ENCODE measurements at regions of chr5 and their contacts with region 1.

Region 1: DNA sequence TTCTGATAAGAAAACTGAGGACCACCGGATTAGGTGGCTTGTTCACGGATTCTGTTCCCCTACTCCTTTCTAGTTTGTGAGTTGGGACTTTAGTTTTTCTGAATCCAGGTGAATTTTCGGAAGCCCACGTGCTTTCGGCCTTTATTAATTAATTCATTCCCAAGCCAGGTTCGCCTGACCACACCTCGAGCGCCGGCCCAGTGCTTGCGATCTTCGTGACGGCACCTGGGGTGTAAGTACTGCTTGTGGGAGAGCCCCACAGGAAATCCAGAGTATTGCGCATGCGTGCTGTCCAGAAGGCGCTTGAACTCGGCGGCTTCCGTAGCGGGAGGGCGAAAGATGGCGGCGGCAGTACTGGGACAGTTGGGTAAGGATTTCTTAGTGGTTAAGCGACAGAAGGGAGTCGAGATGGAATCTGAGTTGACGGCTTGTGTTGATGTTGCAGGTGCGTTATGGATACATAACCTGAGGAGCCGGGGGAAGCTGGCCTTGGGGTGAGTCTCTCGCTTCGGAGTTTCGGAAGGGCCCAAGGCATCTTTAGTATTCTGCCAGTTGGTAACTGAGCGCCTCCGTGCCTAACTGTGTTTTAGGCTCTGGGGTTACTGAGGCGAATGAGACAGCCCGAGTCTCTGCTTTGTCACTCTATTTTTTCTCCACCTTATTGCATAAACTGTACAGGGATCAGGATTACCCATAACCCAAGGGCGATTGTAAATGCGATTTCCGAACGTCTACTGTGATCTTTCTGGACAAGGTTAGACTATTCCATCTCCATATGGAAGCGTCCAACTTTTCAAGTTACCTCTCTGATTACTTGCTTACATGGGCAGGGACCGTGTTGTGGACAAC is at the start of gene MRPL22:
- DNase-seq: peak; percentile 93 to 95
- H3K4me3 ChIP-seq: peak within 1 kb of the TSS; percentile 65
- H3K4me3 Mint-ChIP-seq: peak within 1 kb of the TSS; percentile 93
- H3K27ac Mint-ChIP-seq: peak within 1 kb of the TSS; percentile 90
- H3K4me1 ChIP-seq: peaks cover 14% of the 10 kb centered on the region
- H3K4me1 Mint-ChIP-seq: peaks cover 14% of the 10 kb centered on the region
- H3K27me3 ChIP-seq: no peaks in the 10 kb centered on the region
- H3K27me3 Mint-ChIP-seq: no peaks in the 10 kb centered on the region
- CTCF ChIP-seq: no peak
- total RNA-seq, gene MRPL22: 84.8 and 87.8 TPM in 2 replicates

Region 2: GRCh38 chr5:154916884-154917283 is 24.1 kb before region 1 on chr5:
- CTCF ChIA-PET with region 1: no interaction called
- POLR2A ChIA-PET with region 1: no interaction called
- intact Hi-C with region 1: no loop called
- DNase-seq: no peak
- H3K4me3 ChIP-seq: no peak overlapping the region
- H3K4me3 Mint-ChIP-seq: no peak overlapping the region
- H3K27ac Mint-ChIP-seq: no peak overlapping the region
- H3K4me1 ChIP-seq: no peaks in the 10 kb centered on the region
- H3K4me1 Mint-ChIP-seq: no peaks in the 10 kb centered on the region
- H3K27me3 ChIP-seq: no peaks in the 10 kb centered on the region
- H3K27me3 Mint-ChIP-seq: no peaks in the 10 kb centered on the region
- CTCF ChIP-seq: no peak

Region 3: DNA sequence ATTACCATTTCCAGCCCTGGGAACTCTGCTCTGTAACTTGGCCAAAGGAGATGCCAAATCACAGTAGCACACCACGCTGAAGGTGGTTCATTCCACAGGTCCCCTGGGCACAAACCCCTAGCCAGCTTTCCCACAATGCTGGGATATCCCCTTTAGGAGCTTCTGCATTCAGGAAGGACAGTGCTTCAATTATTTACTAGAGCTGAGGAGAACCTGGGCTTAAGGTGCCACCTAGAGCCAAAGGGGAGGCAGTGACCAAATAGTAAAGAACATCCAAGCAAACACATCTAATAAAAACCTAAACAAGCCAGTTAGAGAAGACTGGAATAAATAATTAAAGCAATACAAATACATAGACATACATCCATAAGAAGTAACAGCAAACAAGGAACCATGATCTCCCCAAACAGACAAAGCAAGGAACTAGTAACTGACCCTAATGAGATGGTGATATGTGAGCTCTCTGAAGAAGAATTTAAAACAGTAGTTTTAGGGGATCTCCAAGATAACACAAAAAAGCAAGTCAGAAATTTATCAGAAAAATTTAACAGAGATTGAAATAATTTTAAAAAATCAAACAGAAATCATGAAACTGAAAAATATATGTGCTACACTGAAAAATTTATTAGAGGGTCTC is 87.1 kb after region 1 on chr5:
- CTCF ChIA-PET with region 1: no interaction called
- POLR2A ChIA-PET with region 1: no interaction called
- intact Hi-C with region 1: loop called (anchors 1 kb)
- DNase-seq: peak in 1 of 2 experiments; percentile 48
- H3K4me3 ChIP-seq: no peak overlapping the region
- H3K4me3 Mint-ChIP-seq: no peak overlapping the region
- H3K27ac Mint-ChIP-seq: no peak overlapping the region
- H3K4me1 ChIP-seq: no peaks in the 10 kb centered on the region
- H3K4me1 Mint-ChIP-seq: no peaks in the 10 kb centered on the region
- H3K27me3 ChIP-seq: peaks cover under 1% of the 10 kb centered on the region; the same call in 1 of the 2 replicates
- H3K27me3 Mint-ChIP-seq: peaks cover 7% of the 10 kb centered on the region
- CTCF ChIP-seq: peak; percentile 33 to 65